H1 (cell line): ENCODE measurements at regions of chr3 and their contacts with region 1.

Region 1: DNA sequence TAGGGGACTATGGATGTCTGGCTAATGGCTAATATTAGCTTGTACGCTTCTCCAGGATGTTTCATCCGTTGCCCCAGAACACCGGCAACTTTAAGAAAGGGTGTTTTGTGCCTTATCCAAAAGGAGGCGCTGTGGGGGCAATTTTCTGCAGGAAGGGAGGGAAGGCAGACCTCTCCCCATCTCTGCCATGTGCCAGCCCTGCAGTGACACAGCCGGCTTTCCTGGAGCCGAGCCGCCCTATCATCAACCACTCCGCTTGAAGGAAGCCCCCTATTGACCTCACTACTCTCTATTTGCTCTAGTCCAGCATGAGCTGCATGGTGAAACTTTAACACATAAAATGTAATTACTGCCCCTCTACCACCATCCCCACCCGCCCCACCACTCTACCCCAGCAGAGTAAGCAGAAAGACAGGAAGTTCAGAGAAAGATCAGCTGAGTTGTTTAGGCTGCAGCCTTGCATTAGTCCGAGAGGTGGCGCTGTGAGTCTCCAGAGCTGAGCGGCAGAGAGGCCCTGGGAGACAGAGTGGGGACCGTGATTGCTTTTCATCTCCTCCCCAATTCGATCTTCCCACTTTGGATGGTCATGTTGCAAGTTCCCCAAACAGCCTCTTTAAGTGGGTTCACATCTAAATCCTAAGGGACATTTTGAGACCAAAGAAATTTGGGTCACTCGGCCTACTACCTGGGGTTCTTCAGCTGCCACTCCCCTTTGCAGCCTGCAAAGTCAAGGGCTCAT is 24.5 kb upstream of the RAD18 start:
- DNase-seq: peak; percentile 50 to 88
- H3K4me3 ChIP-seq: peak overlapping the region in 2 of 4 experiments; percentile 11 to 43; a peak in 3 of 8 replicates
- H3K27ac ChIP-seq: no peak overlapping the region
- H3K4me1 ChIP-seq: peaks cover 0 to 5% (median 2%) of the 10 kb centered on the region in 4 experiments; a peak in 6 of 7 replicates
- H3K27me3 ChIP-seq: no peaks in the 10 kb centered on the region
- CTCF ChIP-seq: peak; percentile 78 to 94 (median 79)
- EP300 ChIP-seq: no peak
- POLR2A ChIP-seq: no peak
- RAD21 ChIP-seq: peak; percentile 82 to 87

Region 2: DNA sequence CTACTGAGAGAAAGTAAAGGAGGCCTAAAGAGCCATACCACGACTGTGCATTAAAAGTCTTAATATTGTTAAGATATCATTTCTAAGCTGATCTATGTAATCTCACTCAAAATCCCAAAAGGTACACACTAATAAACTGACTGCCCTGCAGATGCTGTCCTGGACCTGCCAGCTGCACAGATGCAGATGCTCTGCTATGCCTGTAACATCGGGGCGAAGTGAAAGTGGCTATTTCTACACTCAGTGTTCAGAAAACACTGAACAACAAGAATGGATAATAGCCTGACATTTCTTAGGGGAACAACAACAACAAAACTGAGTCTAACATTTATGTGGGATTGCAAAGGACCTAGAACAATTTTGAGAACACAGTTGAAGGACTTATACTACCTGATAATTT is 56.5 kb before region 1 on chr3:
- CTCF ChIA-PET with region 1: no interaction called
- POLR2A ChIA-PET with region 1: no interaction called
- DNase-seq: no peak
- H3K4me3 ChIP-seq: no peak overlapping the region
- H3K27ac ChIP-seq: no peak overlapping the region
- H3K4me1 ChIP-seq: no peaks in the 10 kb centered on the region
- H3K27me3 ChIP-seq: no peaks in the 10 kb centered on the region
- CTCF ChIP-seq: no peak
- EP300 ChIP-seq: no peak
- POLR2A ChIP-seq: no peak
- RAD21 ChIP-seq: no peak

Region 3: DNA sequence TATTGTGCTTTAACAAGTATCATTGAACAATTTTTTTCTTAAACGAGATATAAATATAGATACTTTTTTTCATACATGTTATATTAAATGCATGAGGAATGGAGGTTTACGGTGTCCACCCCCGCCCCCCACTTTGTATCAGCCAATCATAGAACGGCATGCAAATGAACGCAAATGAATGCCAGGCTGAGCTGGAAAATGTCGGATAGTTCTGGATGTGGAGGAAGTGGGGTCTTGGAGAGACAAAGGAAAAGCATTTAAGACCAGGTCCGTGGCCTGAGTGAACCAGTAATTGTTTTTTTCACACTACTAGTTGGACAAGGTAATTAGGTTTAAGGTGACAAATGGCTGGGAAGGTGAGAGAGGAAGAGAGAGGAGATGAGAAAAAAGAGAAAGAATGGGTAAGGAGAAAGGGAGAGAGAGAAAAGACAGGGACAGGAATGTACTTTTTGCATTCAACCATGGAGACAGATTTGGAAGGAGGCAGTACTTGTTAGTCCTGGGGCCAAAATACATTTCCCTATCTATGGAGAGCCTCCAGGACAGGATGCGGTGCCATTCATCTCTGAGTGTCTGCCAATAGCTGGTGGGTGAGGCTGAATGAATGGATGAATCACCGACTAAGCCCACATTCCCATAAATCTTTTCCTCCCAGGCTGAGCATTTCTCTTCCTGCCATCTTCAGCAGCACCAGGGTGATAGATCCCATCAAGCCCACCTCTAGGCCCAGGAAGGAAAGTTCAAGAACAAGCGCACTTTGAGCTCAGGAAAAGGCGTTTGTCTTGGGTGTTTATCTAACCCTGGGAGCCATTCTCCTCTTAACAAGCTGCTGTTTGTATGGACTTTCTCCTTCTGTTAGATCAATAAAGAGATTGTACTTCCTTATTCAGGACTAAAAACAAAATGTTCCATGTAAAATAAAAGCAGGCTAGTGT is 23.1 kb before region 1 on chr3:
- CTCF ChIA-PET with region 1: interaction called, 176 read pairs
- POLR2A ChIA-PET with region 1: no interaction called
- DNase-seq: peak in 1 of 2 experiments; percentile 53
- H3K4me3 ChIP-seq: no peak overlapping the region
- H3K27ac ChIP-seq: peak overlapping the region; percentile 53
- H3K4me1 ChIP-seq: peaks cover 0 to 10% (median 6%) of the 10 kb centered on the region in 4 experiments; a peak in 5 of 7 replicates
- H3K27me3 ChIP-seq: no peaks in the 10 kb centered on the region
- CTCF ChIP-seq: no peak
- EP300 ChIP-seq: no peak
- POLR2A ChIP-seq: peak in 1 of 2 experiments; percentile 58; a peak in 1 of 3 replicates
- RAD21 ChIP-seq: no peak

Region 4: GRCh38 chr3:9013782-9014563 is 26.2 kb after region 1 on chr3:
- CTCF ChIA-PET with region 1: interaction called, 40 read pairs
- POLR2A ChIA-PET with region 1: interaction called, 3 read pairs
- DNase-seq: no peak
- H3K4me3 ChIP-seq: no peak overlapping the region
- H3K27ac ChIP-seq: no peak overlapping the region
- H3K4me1 ChIP-seq: no peaks in the 10 kb centered on the region
- H3K27me3 ChIP-seq: no peaks in the 10 kb centered on the region
- CTCF ChIP-seq: peak in 1 of 3 experiments; percentile 5; a peak in 1 of 4 replicates
- EP300 ChIP-seq: no peak
- POLR2A ChIP-seq: no peak
- RAD21 ChIP-seq: peak; percentile 28 to 41

Region 5: DNA sequence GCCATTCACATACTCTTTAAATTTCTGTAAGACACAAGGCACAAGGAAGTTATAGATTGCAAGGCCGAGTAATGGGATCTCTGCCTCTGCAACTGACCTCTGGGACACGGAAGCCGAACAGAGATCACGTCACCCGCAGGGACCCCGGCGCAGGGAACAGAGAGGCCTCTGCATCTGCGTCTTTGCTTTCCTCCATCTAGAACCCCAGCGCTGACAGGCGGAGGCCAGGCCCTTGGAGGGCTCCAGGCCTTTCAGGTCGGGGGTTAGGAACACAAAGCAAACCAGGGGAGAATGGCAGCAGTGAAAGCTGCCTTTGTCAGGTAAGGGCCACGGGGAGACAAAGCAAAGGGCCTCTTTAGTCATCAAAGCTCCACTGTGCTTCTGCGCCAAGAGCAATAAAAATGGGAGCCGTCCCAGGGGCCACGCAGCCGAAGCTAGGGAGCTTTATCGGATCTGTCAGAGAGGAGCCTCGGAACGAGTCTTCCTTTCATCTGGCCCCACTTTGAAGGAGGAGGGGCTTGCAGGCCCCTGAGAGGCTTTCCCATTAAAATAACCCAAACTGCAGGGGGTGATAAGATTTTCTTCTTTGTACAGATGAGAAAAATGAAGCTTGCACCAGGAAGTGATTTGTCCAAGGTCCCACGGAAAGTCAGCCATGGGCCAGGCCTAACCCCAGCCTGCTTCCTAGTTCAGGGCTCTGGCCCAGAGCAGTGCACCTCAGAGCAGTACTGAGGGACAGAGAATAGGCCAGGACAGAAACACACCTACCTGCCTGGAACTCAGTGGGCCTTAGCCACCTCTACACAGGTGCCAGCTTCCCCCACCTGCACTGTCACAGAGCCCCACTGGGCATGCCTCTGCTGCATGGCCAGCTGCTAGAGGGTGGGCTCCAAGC is 59.9 kb after region 1 on chr3:
- CTCF ChIA-PET with region 1: interaction called, 21 read pairs
- POLR2A ChIA-PET with region 1: interaction called, 3 read pairs
- DNase-seq: no peak
- H3K4me3 ChIP-seq: no peak overlapping the region
- H3K27ac ChIP-seq: no peak overlapping the region
- H3K4me1 ChIP-seq: peaks cover 0 to 4% (median 0%) of the 10 kb centered on the region in 4 experiments; a peak in 2 of 7 replicates
- H3K27me3 ChIP-seq: no peaks in the 10 kb centered on the region
- CTCF ChIP-seq: no peak
- EP300 ChIP-seq: no peak
- POLR2A ChIP-seq: no peak
- RAD21 ChIP-seq: no peak

Region 6: GRCh38 chr3:9098569-9099367 is 111.0 kb after region 1 on chr3:
- CTCF ChIA-PET with region 1: interaction called, 20 read pairs
- POLR2A ChIA-PET with region 1: no interaction called
- DNase-seq: no peak
- H3K4me3 ChIP-seq: no peak overlapping the region
- H3K27ac ChIP-seq: no peak overlapping the region
- H3K4me1 ChIP-seq: peaks cover 4 to 22% (median 18%) of the 10 kb centered on the region in 4 experiments; a peak in 5 of 7 replicates
- H3K27me3 ChIP-seq: no peaks in the 10 kb centered on the region
- CTCF ChIP-seq: no peak
- EP300 ChIP-seq: no peak
- POLR2A ChIP-seq: no peak
- RAD21 ChIP-seq: no peak

Region 7: GRCh38 chr3:9122732-9123364 is 135.0 kb after region 1 on chr3:
- CTCF ChIA-PET with region 1: interaction called, 15 read pairs
- POLR2A ChIA-PET with region 1: no interaction called
- DNase-seq: no peak
- H3K4me3 ChIP-seq: no peak overlapping the region
- H3K27ac ChIP-seq: no peak overlapping the region
- H3K4me1 ChIP-seq: peaks cover 5 to 14% (median 8%) of the 10 kb centered on the region in 4 experiments; a peak in 5 of 7 replicates
- H3K27me3 ChIP-seq: no peaks in the 10 kb centered on the region
- CTCF ChIP-seq: no peak
- EP300 ChIP-seq: no peak
- POLR2A ChIP-seq: no peak
- RAD21 ChIP-seq: no peak

Region 8: DNA sequence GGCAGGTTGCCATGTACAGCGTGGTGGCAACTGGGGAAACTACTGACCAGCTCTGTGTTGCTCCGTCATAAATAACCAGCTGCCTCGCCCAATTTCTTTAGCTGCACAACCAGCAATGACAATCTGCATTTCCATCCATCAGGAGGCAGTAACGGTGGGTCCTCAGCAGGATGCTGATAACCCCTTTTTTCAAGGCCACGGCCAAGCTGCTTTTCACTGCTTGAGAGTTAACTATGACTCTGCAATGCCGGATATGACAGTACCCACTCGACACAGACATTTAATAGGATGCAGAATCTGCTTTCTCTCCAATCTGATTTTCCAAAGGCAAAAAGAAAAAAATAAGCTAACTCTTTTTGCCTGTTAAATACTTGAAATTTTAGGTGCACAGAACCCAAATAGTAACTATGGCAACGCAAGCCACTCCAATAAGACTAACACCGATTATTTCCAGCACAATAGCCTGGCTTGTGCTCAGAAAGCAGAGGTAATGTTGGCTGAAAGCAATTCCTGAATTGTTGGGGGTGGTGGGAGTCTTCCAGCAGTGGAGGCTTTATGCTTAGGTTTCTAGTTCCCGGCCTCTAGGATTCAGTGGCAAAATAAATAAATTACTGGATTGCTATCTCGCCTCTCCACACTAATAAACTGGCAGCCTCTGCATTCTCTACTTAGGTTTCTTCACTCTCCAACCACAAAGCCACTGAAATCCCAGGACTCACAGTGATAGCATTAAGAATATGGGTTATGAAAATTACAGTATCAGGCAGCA is 292.8 kb after region 1 on chr3:
- CTCF ChIA-PET with region 1: interaction called, 10 read pairs
- POLR2A ChIA-PET with region 1: no interaction called
- DNase-seq: no peak
- H3K4me3 ChIP-seq: no peak overlapping the region
- H3K27ac ChIP-seq: no peak overlapping the region
- H3K4me1 ChIP-seq: peaks cover 5 to 8% (median 6%) of the 10 kb centered on the region in 4 experiments
- H3K27me3 ChIP-seq: no peaks in the 10 kb centered on the region
- CTCF ChIP-seq: peak in 1 of 3 experiments; percentile 12; a peak in 1 of 4 replicates
- EP300 ChIP-seq: no peak
- POLR2A ChIP-seq: no peak
- RAD21 ChIP-seq: peak in 1 of 2 experiments; percentile 16; a peak in 1 of 4 replicates